ENCODE measurements at regions of chr12 and their contacts with region 1.

Region 1: DNA sequence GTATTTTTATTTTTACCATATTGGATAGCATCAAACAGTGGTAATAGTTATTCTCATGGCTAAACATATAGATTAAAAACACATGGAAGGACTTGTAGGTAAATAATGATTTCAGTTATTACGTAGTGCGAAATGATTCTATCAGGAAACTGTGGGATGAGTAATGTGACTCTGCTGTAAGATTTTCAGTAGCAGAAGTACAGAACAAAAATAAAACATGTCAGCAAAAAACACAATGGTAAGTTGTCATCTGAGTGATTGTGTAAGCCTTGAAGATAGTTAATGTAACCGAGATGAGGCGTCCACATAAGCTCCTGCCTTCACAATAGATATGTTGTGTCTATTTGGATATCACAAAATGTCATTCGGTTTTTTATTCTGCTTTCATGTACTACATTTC is 99.8 kb downstream of the BORCS5 start:
- DNase-seq: no peak
- ATAC-seq: no peak
- H3K4me3 ChIP-seq: no peak overlapping the region
- H3K27ac ChIP-seq: no peak overlapping the region
- H3K4me1 ChIP-seq: peaks cover 9% of the 10 kb centered on the region; the same call in 1 of the 2 replicates
- H3K27me3 ChIP-seq: no peaks in the 10 kb centered on the region
- CTCF ChIP-seq: no peak
- EP300 ChIP-seq: no peak
- POLR2A ChIP-seq: no peak
- RAD21 ChIP-seq: no peak

Region 2: DNA sequence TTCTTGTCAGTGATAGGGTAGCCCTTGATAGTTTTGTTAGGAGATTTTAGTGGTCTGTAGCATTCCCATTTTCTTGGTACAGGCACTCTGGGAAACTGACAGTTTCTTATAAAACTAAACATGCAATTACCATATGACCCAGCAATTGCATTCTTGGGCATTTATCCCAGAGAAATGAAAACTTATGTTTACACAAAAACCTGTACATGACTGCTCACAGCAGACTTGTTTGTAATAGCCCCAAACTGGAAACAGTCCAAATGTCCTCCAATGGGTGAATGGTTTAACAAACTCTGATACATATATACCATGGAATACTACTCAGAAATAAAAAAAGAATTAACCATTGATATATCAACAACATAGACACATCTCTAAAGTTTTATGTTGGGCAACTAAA is 24.3 kb before region 1 on chr12:
- CTCF ChIA-PET with region 1: interaction called, 4 read pairs
- POLR2A ChIA-PET with region 1: interaction called, 10 read pairs
- RAD21 ChIA-PET with region 1: no interaction called
- SMC1A ChIA-PET with region 1: interaction called, 7 read pairs
- in situ Hi-C with region 1: no loop called
- intact Hi-C with region 1: no loop called
- DNase-seq: no peak
- ATAC-seq: no peak
- H3K4me3 ChIP-seq: no peak overlapping the region
- H3K27ac ChIP-seq: no peak overlapping the region
- H3K4me1 ChIP-seq: peaks cover 13% of the 10 kb centered on the region
- H3K27me3 ChIP-seq: no peaks in the 10 kb centered on the region
- CTCF ChIP-seq: no peak
- EP300 ChIP-seq: no peak
- POLR2A ChIP-seq: no peak
- RAD21 ChIP-seq: no peak

Region 3: GRCh38 chr12:12442548-12443071 is 14.0 kb before region 1 on chr12:
- CTCF ChIA-PET with region 1: interaction called, 7 read pairs
- POLR2A ChIA-PET with region 1: interaction called, 4 read pairs
- RAD21 ChIA-PET with region 1: interaction called, 4 read pairs
- SMC1A ChIA-PET with region 1: interaction called, 12 read pairs
- in situ Hi-C with region 1: no loop called
- intact Hi-C with region 1: no loop called
- DNase-seq: no peak
- ATAC-seq: no peak
- H3K4me3 ChIP-seq: no peak overlapping the region
- H3K27ac ChIP-seq: no peak overlapping the region
- H3K4me1 ChIP-seq: no peaks in the 10 kb centered on the region
- H3K27me3 ChIP-seq: no peaks in the 10 kb centered on the region
- CTCF ChIP-seq: no peak
- EP300 ChIP-seq: no peak
- POLR2A ChIP-seq: no peak
- RAD21 ChIP-seq: no peak

Region 4: DNA sequence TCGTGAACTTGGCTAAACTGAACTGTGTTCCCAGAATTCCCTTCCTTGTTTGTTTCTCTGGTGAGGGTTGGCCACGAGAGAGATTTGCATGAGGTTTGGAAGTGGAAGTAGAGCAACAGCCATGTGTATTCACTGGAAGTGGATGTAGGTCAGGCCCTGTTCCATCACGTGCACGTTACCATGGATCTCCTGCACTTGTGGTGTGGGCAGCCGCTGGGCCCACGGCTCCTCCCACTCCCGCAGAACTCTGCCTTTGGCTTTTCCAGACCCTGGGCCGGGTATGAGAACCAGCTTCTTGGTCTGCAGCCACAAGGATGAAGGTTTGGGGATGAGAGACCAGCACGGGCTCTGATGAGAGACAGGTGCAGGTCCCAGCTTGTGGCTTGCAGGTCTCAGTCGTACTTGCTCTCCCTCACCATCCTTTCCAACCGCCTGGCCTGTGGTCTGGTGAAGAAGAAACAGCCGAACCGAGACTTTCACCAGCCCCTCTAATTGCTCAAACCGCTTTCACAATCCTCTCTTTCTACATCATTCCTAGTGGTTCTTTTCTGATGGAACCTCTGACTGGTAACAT is 11.1 kb after region 1 on chr12:
- CTCF ChIA-PET with region 1: interaction called, 3 read pairs
- POLR2A ChIA-PET with region 1: interaction called, 9 read pairs
- RAD21 ChIA-PET with region 1: interaction called, 3 read pairs
- SMC1A ChIA-PET with region 1: interaction called, 17 read pairs
- in situ Hi-C with region 1: no loop called
- intact Hi-C with region 1: no loop called
- DNase-seq: no peak
- ATAC-seq: no peak
- H3K4me3 ChIP-seq: no peak overlapping the region
- H3K27ac ChIP-seq: no peak overlapping the region
- H3K4me1 ChIP-seq: no peaks in the 10 kb centered on the region
- H3K27me3 ChIP-seq: no peaks in the 10 kb centered on the region
- CTCF ChIP-seq: no peak
- EP300 ChIP-seq: no peak
- POLR2A ChIP-seq: no peak
- RAD21 ChIP-seq: no peak